Activated CD4-positive, alpha-beta T cell treated with anti-CD3 and anti-CD28 coated beads, Interleukin-2, amount 10 ng/mL, durations not matched to agents 7 days and 5 days (primary cell): ENCODE measurements at regions of chr9 and their contacts with region 1.

Region 1: GRCh38 chr9:84285381-84285780 is 55.2 kb downstream of the SLC28A3 start:
- DNase-seq: no peak
- H3K4me3 Mint-ChIP-seq: no peak overlapping the region
- H3K27ac Mint-ChIP-seq: peak overlapping the region; percentile 84
- H3K4me1 Mint-ChIP-seq: peaks cover 17% of the 10 kb centered on the region
- H3K27me3 Mint-ChIP-seq: peaks cover 4% of the 10 kb centered on the region

Region 2: GRCh38 chr9:84261082-84261746 is 24.2 kb before region 1 on chr9:
- CTCF ChIA-PET with region 1: interaction called, 13 read pairs
- POLR2A ChIA-PET with region 1: no interaction called
- DNase-seq: peak; percentile 57
- H3K4me3 Mint-ChIP-seq: no peak overlapping the region
- H3K27ac Mint-ChIP-seq: no peak overlapping the region
- H3K4me1 Mint-ChIP-seq: peaks cover 10% of the 10 kb centered on the region
- H3K27me3 Mint-ChIP-seq: peaks cover 6% of the 10 kb centered on the region

Region 3: DNA sequence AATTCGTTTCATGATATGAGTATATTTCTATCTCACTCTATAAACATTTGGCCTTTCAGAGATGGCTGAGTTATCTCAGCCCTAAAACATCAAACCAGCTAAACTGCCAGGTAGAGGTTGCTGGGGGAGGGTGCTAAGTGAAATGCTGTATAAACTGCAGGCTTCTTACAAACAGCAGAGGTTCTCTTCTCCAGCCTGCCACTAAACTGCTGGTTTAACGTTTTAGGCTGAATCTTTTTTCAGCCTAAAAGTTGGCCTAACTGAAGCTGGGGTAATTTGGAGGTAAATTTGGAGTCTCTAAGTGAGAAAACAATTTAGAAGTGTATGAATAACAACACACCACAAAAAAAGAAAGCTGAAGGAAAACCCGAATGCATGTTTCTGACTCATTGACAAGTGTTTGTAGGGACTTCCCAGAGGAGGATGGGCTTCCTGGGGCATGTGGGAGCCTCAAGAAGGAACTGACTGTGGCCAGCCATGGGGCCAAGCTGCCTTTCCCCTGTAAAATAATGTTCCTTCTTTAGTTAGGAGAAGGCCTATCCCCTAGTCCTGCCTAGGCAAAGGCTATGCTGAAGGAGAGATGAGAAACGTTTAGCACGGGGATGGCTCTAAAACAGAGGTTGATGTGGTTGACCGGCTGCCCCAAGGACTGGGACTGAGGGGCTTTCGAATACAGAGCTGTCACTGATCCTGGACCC is 10.9 kb after region 1 on chr9:
- CTCF ChIA-PET with region 1: interaction called, 32 read pairs
- POLR2A ChIA-PET with region 1: no interaction called
- DNase-seq: peak; percentile 29
- H3K4me3 Mint-ChIP-seq: peak overlapping the region; percentile 9
- H3K27ac Mint-ChIP-seq: peak overlapping the region; percentile 99
- H3K4me1 Mint-ChIP-seq: peaks cover 63% of the 10 kb centered on the region
- H3K27me3 Mint-ChIP-seq: no peaks in the 10 kb centered on the region